Left ventricle myocardium superior (tissue), 1 donor: ENCODE measurements at regions of chr6 and their contacts with region 1.

Region 1: GRCh38 chr6:44096612-44097011 is 30.6 kb downstream of the MRPL14 start:
- DNase-seq: peak; percentile 76
- ATAC-seq: peak; percentile 84

Region 2: DNA sequence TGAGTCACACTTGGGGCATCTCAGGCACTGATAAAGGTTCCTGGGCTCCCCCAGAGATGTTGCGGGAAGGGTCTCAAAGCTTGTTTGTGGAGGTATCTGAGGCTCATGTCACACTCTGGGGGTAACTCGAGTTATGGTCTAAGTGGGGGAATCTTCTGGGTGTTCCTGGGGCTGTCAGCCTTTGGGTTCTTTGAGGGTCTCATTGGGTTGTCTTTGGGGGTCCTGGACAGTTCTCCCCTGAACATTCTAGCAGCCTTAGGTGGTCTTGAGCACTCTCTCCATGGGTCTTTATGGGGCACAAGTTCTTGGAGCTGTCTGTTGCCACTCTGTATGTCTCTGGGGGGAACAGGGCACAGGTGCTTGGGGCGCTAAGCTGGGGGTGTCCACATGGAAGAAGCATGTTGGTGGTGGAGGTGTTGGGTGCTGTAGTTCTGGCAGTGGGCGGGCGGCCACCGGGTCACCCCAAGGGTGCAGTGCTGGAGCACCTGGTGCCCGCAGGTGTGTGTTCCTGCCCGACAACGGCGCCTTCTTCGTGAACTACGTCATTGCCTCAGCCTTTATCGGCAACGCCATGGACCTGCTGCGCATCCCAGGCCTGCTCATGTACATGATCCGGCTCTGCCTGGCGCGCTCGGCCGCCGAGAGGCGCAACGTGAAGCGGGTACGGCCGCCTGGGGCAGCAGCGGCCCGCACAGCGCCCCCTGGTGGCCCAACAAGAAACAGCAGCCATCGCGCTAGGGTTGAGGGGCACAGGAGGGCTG is 54.9 kb after region 1 on chr6:
- intact Hi-C with region 1: loop called (anchors 5 kb)
- DNase-seq: peak; percentile 87
- ATAC-seq: peak; percentile 84